ENCODE measurements at regions of chr17 and their contacts with region 1.

Region 1: GRCh38 chr17:34416116-34416515 is 53.1 kb upstream of the CCL1 start:
- DNase-seq: no peak
- ATAC-seq: no peak

Region 2: DNA sequence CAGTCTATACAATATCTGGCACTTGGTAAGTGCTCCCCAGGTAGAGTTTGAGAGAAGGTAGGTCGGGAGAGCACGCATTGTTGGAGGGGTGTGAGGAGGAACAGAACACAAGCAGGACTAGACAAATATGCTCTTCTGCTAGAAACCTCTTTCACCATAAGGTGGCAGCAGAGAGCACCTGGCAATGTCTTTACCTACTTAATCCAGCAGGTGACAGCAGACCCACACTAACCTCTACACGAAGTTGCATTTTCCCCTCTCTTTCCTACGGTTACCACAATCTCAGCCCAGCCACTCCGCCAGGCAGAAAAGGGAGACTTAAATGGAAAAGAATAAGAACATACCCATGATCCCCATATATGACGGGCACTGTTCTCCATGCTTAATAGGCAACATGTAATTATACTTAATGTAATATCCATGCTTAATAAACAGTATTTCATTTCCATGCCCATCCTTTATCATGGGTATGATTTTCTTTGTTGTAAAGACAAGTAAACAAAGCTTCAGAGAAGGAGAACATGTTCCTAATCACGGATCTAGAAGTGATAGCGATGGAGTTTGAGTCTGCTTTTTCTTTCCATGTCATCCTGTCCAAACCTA is 216.1 kb before region 1 on chr17:
- intact Hi-C with region 1: no loop called
- DNase-seq: peak; percentile 88
- ATAC-seq: peak; percentile 96

Region 3: GRCh38 chr17:34398990-34399389 is 17.1 kb before region 1 on chr17:
- intact Hi-C with region 1: no loop called
- DNase-seq: no peak
- ATAC-seq: peak; percentile 39

Region 4: GRCh38 chr17:35119368-35120165 is 703.5 kb after region 1 on chr17 and contains the start of gene RAD51D:
- intact Hi-C with region 1: loop called (anchors 5 kb)
- DNase-seq: peak; percentile 84
- ATAC-seq: peak; percentile 91
- total RNA-seq, gene RAD51D: 16.9 TPM

Measured in sciatic nerve (tissue), 2 donors.